Caco-2 (cell line): ENCODE measurements at regions of chr16 and their contacts with region 1.

Region 1: GRCh38 chr16:4924593-4925378 is 12.2 kb downstream of the PPL start:
- DNase-seq: peak; percentile 91 to 95
- H3K4me3 ChIP-seq: no peak overlapping the region
- H3K4me3 Mint-ChIP-seq: peak overlapping the region; percentile 65
- H3K27ac Mint-ChIP-seq: peak overlapping the region; percentile 98
- H3K4me1 ChIP-seq: peaks cover 37% of the 10 kb centered on the region
- H3K4me1 Mint-ChIP-seq: peaks cover 26% of the 10 kb centered on the region
- H3K27me3 ChIP-seq: no peaks in the 10 kb centered on the region
- H3K27me3 Mint-ChIP-seq: no peaks in the 10 kb centered on the region
- CTCF ChIP-seq: peak in 1 of 2 experiments; percentile 64

Region 2: GRCh38 chr16:4947722-4948503 is 23.1 kb after region 1 on chr16:
- CTCF ChIA-PET with region 1: no interaction called
- POLR2A ChIA-PET with region 1: no interaction called
- intact Hi-C with region 1: loop called (anchors 1 kb)
- DNase-seq: peak; percentile 74 to 75
- H3K4me3 ChIP-seq: no peak overlapping the region
- H3K4me3 Mint-ChIP-seq: peak overlapping the region; percentile 62
- H3K27ac Mint-ChIP-seq: peak overlapping the region; percentile 93
- H3K4me1 ChIP-seq: peaks cover 58% of the 10 kb centered on the region
- H3K4me1 Mint-ChIP-seq: peaks cover 39% of the 10 kb centered on the region
- H3K27me3 ChIP-seq: no peaks in the 10 kb centered on the region
- H3K27me3 Mint-ChIP-seq: no peaks in the 10 kb centered on the region
- CTCF ChIP-seq: no peak

Region 3: DNA sequence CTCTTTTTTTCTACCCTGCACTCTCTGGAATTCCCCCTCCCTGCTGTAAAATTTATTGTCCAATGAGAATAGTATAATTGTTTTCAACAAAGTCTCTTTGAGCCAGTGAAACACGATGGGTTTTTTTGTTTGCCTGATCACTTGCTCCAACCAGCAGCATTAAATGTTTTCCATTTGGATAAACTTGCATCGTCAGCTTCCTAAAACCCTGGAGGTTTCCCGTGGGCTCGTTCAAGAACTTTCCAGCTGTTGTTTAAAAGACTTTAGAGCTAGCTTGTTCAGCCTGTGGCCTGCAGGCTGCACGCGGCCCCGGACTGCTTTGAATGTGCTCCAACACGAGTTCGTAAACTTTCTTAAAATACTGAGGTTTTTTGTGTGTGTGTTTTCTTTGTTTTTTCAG is 94.0 kb after region 1 on chr16:
- CTCF ChIA-PET with region 1: no interaction called
- POLR2A ChIA-PET with region 1: no interaction called
- intact Hi-C with region 1: no loop called
- DNase-seq: no peak
- H3K4me3 ChIP-seq: no peak overlapping the region
- H3K4me3 Mint-ChIP-seq: no peak overlapping the region
- H3K27ac Mint-ChIP-seq: no peak overlapping the region
- H3K4me1 ChIP-seq: no peaks in the 10 kb centered on the region
- H3K4me1 Mint-ChIP-seq: no peaks in the 10 kb centered on the region
- H3K27me3 ChIP-seq: no peaks in the 10 kb centered on the region
- H3K27me3 Mint-ChIP-seq: no peaks in the 10 kb centered on the region
- CTCF ChIP-seq: no peak